ENCODE measurements at regions of chr10 and their contacts with region 1.

Region 1: GRCh38 chr10:114726820-114727271 is 68.8 kb upstream of the ABLIM1 start:
- DNase-seq: no peak
- ATAC-seq: no peak

Region 2: DNA sequence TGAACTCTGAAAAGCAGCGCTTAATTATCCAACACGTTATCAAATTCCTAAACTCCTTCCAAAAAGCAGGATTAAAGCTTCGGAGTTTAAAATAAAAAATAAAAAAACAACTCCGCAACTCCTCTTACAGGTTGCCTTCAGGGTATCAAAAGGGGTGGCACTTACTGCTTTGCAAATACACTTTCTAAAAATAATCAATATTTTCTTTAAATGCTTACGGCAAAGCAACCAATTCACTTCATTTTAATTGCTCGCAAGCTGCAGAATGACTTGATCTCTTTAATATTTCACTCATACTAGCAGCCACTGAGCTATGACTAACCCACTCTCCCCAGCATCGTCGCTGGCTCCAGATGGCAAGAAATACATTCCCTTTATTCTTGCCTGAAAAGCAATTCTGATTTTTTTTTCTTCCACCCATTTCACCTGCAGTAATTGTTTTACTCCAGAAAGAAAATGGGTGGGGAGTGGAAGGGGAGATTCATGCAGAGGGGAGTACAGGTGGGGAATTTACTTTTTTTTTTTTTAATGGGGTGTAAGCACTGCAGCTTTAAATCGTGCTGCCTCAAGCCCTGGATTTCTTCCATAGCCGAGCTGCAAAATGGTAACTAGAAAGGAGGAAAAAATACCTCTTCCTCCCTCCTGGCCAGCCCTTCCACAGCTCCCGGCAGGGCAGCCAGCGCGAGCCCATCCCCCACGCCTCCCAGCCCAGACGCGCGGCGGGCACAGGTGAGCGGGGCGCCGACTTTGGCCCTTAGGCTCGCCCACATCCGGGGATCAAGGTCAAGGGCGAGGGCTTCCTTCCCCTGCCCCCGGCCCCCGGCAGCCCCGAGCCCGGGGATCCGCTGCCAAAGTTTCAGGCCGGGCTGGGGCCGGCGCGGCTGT is 40.5 kb after region 1 on chr10:
- intact Hi-C with region 1: loop called (anchors 5 kb)
- DNase-seq: peak; percentile 64
- ATAC-seq: peak; percentile 81